PC-9 (cell line): ENCODE measurements at regions of chr9 and their contacts with region 1.

Region 1: DNA sequence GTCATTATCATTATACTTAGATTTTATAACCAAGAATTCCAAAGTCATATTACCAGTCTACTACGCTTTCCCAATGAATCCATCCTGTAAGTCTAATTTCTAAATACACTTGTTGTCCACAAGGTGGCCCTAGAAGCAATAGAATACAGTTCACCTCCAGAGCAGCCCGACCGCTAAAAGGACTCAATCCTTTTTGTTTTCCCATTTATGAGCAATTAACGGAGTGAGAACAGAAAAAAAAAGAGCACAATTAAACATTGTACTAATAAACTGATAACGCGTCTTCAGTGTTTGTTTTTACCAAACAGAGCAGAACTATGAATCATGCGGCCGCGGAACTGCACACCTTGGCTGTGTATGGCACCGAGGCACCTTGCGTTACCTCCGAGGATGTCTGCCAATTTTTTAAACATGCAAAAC is 160.7 kb upstream of the DAPK1 start:
- DNase-seq: peak; percentile 38 to 75
- H3K4me3 ChIP-seq: peak overlapping the region; percentile 52
- H3K27ac ChIP-seq: peak overlapping the region; percentile 20; the same call in 1 of the 2 replicates
- H3K4me1 ChIP-seq: peaks cover 13% of the 10 kb centered on the region
- H3K27me3 ChIP-seq: no peaks in the 10 kb centered on the region
- CTCF ChIP-seq: peak; percentile 94

Region 2: DNA sequence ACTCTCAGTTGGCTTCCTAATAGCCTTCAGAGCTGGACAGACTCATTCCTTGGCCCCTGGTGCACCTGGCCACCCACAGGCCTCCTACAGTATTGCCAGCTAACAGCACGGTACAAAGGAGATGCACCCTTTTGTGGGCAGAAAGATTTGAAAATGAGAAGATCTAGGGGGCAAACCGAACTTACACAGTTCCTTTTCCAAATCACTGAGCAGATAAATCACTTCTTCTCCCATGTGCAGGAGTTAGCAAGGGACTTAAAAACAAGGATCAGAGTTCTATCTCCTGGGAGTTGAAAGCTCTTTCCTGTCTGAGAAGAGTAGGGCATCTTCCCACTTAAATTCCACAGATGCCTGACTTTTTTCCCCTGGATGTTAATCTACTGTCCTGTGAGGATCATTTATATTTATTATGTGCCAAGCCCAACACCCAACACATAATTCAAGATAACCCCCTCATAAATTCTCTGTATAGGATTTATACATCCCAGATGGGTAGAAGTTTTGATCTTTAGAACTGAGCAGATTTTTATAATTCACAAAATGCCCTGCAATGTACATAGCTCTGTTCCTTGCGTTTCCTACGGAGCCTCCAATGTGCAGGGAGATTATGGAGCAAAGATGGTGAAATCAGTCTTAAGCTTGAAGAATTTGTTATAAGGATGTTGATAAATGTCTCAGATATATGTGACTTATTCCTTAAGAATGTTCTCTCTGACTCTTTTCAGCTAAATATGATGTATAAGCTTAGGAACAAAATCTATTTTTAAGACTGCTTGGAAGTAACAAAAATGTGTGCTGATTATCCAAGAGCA is 46.5 kb before region 1 on chr9:
- CTCF ChIA-PET with region 1: no interaction called
- POLR2A ChIA-PET with region 1: no interaction called
- intact Hi-C with region 1: no loop called
- DNase-seq: no peak
- H3K4me3 ChIP-seq: no peak overlapping the region
- H3K27ac ChIP-seq: no peak overlapping the region
- H3K4me1 ChIP-seq: 0 out of 2 replicates have a peak, but pooled peaks cover 3% of the 10 kb centered on the region
- H3K27me3 ChIP-seq: no peaks in the 10 kb centered on the region
- CTCF ChIP-seq: peak; percentile 50; the same call in 1 of the 2 replicates

Region 3: GRCh38 chr9:87382902-87383301 is 46.0 kb after region 1 on chr9:
- CTCF ChIA-PET with region 1: no interaction called
- POLR2A ChIA-PET with region 1: no interaction called
- intact Hi-C with region 1: no loop called
- DNase-seq: no peak
- H3K4me3 ChIP-seq: no peak overlapping the region
- H3K27ac ChIP-seq: no peak overlapping the region
- H3K4me1 ChIP-seq: peaks cover 48% of the 10 kb centered on the region
- H3K27me3 ChIP-seq: no peaks in the 10 kb centered on the region
- CTCF ChIP-seq: no peak

Region 4: GRCh38 chr9:87405677-87406542 is 69.0 kb after region 1 on chr9:
- CTCF ChIA-PET with region 1: no interaction called
- POLR2A ChIA-PET with region 1: no interaction called
- intact Hi-C with region 1: loop called (anchors 2 kb)
- DNase-seq: peak in 1 of 2 experiments; percentile 65
- H3K4me3 ChIP-seq: peak overlapping the region; percentile 2; the same call in 1 of the 2 replicates
- H3K27ac ChIP-seq: peak overlapping the region; percentile 69
- H3K4me1 ChIP-seq: peaks cover 53% of the 10 kb centered on the region
- H3K27me3 ChIP-seq: no peaks in the 10 kb centered on the region
- CTCF ChIP-seq: no peak

Region 5: GRCh38 chr9:87497604-87498045 is 160.7 kb after region 1 on chr9 and contains the start of gene DAPK1:
- CTCF ChIA-PET with region 1: interaction called, 7 read pairs
- POLR2A ChIA-PET with region 1: interaction called, 5 read pairs
- intact Hi-C with region 1: loop called (anchors 1 kb)
- DNase-seq: peak; percentile 52 to 81
- H3K4me3 ChIP-seq: peak within 1 kb of the TSS; percentile 70
- H3K27ac ChIP-seq: peak within 1 kb of the TSS; percentile 45
- H3K4me1 ChIP-seq: peaks cover 61% of the 10 kb centered on the region
- H3K27me3 ChIP-seq: no peaks in the 10 kb centered on the region
- CTCF ChIP-seq: peak; percentile 33; the same call in 1 of the 2 replicates
- total RNA-seq, gene DAPK1: 100 and 158 TPM in 2 replicates

Region 6: DNA sequence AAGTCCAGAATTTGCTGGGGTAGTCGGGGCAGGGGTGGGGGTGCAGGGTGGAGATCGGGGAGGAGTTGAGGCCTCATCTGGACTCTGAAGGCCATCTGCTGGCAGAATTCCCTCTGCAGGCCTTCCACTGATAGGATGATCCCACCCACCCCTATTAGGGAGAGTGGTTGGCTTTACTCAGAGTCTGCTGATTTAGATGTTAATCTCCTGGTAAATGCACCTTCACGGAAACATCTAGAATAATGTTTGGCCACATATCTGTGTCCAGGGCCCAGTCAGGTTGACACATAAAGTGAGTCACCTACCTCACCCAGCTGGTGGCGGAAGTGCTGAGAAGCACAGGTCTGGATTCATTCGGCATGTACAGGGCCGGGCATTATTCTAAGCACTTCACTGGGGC is 210.7 kb after region 1 on chr9:
- CTCF ChIA-PET with region 1: interaction called, 3 read pairs
- POLR2A ChIA-PET with region 1: no interaction called
- intact Hi-C with region 1: loop called (anchors 2 kb)
- DNase-seq: peak; percentile 69 to 80
- H3K4me3 ChIP-seq: no peak overlapping the region
- H3K27ac ChIP-seq: no peak overlapping the region
- H3K4me1 ChIP-seq: peaks cover 17% of the 10 kb centered on the region; the same call in 1 of the 2 replicates
- H3K27me3 ChIP-seq: no peaks in the 10 kb centered on the region
- CTCF ChIP-seq: no peak

Region 7: DNA sequence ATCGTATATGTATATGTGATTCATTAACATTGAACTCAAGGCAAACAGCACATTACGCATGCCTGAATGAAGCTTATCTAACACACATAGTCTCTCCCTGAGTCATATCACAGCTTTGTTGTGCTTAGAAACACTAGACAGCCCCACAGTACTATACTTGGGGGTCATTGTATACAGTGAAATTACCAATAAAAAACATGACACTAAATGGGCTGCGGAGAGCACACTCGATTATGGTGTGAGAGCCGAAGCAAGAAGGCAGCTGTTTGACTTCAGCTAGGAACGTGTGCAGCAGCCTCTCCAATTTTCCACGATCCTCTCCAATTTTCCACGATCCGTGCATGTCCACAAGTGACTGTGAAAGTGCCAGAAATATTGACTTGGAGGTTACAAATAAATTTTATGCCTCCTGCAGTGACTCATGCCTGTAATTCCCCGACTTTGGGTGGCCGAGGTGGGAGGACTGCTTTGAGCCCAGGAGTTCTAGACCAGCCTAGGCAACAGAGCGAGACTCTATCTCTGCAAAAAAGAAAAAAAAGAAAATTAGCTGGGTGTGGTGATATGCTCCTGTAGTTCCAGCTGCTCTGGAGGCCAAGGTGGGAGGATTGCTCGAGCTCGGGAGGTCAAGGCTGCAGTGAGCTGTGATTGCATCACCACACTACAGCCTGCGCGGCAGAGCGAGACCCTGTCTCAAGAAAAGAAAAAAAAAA is 263.1 kb after region 1 on chr9:
- CTCF ChIA-PET with region 1: no interaction called
- POLR2A ChIA-PET with region 1: no interaction called
- intact Hi-C with region 1: loop called (anchors 5 kb)
- DNase-seq: peak; percentile 43 to 96
- H3K4me3 ChIP-seq: peak overlapping the region; percentile 22; the same call in 1 of the 2 replicates
- H3K27ac ChIP-seq: peak overlapping the region; percentile 56
- H3K4me1 ChIP-seq: peaks cover 52% of the 10 kb centered on the region
- H3K27me3 ChIP-seq: no peaks in the 10 kb centered on the region
- CTCF ChIP-seq: no peak

Region 8: GRCh38 chr9:87812375-87813118 is 475.6 kb after region 1 on chr9:
- CTCF ChIA-PET with region 1: no interaction called
- POLR2A ChIA-PET with region 1: no interaction called
- intact Hi-C with region 1: loop called (anchors 2 kb)
- DNase-seq: peak; percentile 38 to 39
- H3K4me3 ChIP-seq: no peak overlapping the region
- H3K27ac ChIP-seq: no peak overlapping the region
- H3K4me1 ChIP-seq: no peaks in the 10 kb centered on the region
- H3K27me3 ChIP-seq: no peaks in the 10 kb centered on the region
- CTCF ChIP-seq: peak; percentile 98

Region 9: GRCh38 chr9:88766778-88767503 is 1430.0 kb after region 1 on chr9:
- CTCF ChIA-PET with region 1: no interaction called
- POLR2A ChIA-PET with region 1: no interaction called
- intact Hi-C with region 1: no loop called
- DNase-seq: no peak
- H3K4me3 ChIP-seq: no peak overlapping the region
- H3K27ac ChIP-seq: peak overlapping the region; percentile 27
- H3K4me1 ChIP-seq: 0 out of 2 replicates have a peak, but pooled peaks cover 5% of the 10 kb centered on the region
- H3K27me3 ChIP-seq: no peaks in the 10 kb centered on the region
- CTCF ChIP-seq: no peak